Psoas muscle (tissue), 8 donors: ENCODE measurements at regions of chr5 and their contacts with region 1.

Region 1: DNA sequence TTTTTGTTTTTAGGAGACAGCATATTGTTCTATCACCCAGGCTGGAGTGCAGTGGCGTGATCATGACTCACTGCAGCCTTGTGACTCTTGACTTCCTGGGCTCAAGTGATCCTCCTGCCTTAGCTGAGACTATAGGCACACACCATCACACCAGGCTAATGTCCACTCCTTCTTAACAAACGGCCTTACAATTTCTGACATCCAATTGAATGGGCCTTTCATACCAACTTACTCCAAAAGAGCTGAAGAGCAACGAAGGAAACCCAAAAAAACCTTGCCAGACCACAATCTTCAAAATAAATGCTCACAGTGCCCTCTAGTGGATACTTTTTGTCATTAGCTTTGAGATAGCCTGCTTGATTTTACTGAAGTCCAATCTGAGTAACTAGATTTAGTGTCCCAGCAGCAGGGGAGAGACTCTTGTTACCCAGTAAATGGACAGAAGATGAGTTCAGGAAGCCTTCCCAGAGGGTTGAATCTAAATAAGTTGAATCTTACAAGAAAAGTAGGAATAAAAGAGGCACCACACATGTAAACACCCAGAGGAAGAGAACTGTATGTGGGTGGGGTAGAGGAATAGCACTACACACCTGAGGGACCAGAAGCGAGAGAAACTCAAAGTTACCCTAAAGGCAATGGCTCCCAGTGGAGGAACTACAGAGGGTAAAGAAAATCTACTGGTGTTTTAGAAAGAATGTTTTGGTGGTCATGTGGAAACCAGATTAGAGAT is 9.3 kb downstream of the ZNF622 start:
- DNase-seq: peak; percentile 26 to 57
- ATAC-seq: peak; percentile 78 to 84 (median 82)
- H3K4me3 ChIP-seq: no peak overlapping the region
- H3K27ac ChIP-seq: peak overlapping the region; percentile 47
- H3K4me1 ChIP-seq: peaks cover 60% of the 10 kb centered on the region
- H3K27me3 ChIP-seq: no peaks in the 10 kb centered on the region
- CTCF ChIP-seq: peak; percentile 78

Region 2: DNA sequence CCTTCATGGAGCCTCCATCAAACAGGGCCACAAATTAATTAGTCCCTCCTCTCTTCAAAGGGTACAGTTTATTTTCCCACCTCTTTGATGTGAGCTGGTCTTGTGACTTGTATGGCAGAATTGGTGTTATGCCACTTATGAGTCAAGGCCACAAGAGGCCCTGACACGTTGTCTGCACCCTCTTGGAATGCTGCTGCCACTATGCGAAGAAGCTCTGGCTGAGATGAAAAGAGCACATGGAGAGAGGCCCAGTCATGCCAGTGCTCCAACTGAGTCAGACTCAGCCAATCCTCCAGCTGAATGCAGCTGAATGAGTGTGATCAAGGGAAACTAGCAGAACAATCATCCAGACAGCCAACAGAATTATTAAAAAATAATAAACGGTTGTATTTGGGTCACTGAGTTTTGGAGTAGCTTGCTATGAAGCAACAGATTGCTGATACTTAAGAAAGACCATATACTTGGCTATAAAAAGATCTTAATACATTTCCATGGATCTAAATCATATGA is 405.0 kb before region 1 on chr5:
- intact Hi-C with region 1: no loop called
- DNase-seq: no peak
- ATAC-seq: no peak
- H3K4me3 ChIP-seq: no peak overlapping the region
- H3K27ac ChIP-seq: no peak overlapping the region
- H3K4me1 ChIP-seq: no peaks in the 10 kb centered on the region
- H3K27me3 ChIP-seq: peaks cover 0 to 5% (median 0%) of the 10 kb centered on the region in 3 donors
- CTCF ChIP-seq: no peak

Region 3: DNA sequence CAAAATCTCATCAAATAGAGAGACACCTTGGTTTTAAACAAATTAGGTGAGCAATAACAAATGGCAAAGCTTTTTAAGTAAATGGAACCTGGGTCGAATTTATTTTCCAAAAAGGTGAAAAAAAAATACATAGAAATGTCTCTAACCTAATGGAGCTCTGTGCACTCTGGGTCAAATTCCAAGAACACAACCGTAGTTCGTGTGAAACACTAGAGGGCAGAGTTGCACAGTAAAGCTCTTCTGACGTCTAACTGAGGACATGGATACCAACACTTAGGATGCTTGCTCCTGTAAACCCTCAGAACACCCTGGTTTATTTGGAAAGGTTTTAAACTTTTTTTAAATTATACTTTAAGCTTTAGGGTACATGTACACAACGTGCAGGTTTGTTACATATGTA is 295.6 kb before region 1 on chr5:
- intact Hi-C with region 1: loop called in 1 of 2 experiments (anchors 10 kb)
- DNase-seq: no peak
- ATAC-seq: peak; percentile 40 to 80 (median 68)
- H3K4me3 ChIP-seq: no peak overlapping the region
- H3K27ac ChIP-seq: no peak overlapping the region
- H3K4me1 ChIP-seq: no peaks in the 10 kb centered on the region
- H3K27me3 ChIP-seq: no peaks in the 10 kb centered on the region
- CTCF ChIP-seq: peak; percentile 59

Region 4: DNA sequence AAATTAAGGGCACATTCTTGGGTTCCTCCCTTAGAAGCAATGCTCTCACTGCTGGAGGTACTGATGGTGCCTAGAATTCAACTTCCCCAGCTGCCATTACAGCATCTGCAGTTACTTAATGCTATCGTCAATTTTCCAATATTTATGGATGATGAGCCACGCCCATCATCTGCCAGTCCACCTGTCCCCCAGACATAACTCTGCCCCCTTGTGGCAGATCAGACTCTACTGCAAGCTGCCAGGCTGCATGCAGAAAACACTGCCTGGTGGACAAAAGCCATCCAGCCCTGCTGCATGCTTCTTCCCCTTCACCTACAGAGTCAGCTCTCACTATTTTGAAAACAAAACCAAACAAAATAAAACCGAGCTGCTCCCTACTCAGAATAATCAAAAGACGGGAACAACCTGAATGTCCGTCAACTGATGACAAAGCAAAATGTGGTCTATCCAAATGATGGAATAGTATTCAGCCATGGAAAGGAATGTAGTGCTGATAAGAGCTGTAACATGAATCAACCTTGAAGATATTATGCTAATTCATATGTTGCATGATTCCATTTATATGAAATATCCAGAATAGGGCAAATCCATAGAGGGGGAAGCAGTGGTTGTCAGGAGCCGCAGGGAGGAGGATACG is 94.2 kb after region 1 on chr5:
- intact Hi-C with region 1: no loop called
- DNase-seq: no peak
- ATAC-seq: peak; percentile 63 to 74 (median 71)
- H3K4me3 ChIP-seq: peak overlapping the region; percentile 55
- H3K27ac ChIP-seq: peak overlapping the region; percentile 84
- H3K4me1 ChIP-seq: peaks cover 50% of the 10 kb centered on the region
- H3K27me3 ChIP-seq: no peaks in the 10 kb centered on the region
- CTCF ChIP-seq: peak; percentile 77